Body of pancreas (tissue), 4 donors: ENCODE measurements at regions of chr9 and their contacts with region 1.

Region 1: GRCh38 chr9:72812559-72813111 is 140.2 kb downstream of the ALDH1A1 start:
- DNase-seq: no peak
- ATAC-seq: no peak
- H3K4me3 ChIP-seq: no peak overlapping the region
- H3K27ac ChIP-seq: no peak overlapping the region
- H3K4me1 ChIP-seq: peaks cover 14% of the 10 kb centered on the region
- H3K27me3 ChIP-seq: no peaks in the 10 kb centered on the region
- CTCF ChIP-seq: no peak
- POLR2A ChIP-seq: no peak

Region 2: GRCh38 chr9:72599879-72600534 is 212.6 kb before region 1 on chr9:
- intact Hi-C with region 1: loop called (anchors 10 kb)
- DNase-seq: no peak
- ATAC-seq: no peak
- H3K4me3 ChIP-seq: no peak overlapping the region
- H3K27ac ChIP-seq: no peak overlapping the region
- H3K4me1 ChIP-seq: no peaks in the 10 kb centered on the region
- H3K27me3 ChIP-seq: no peaks in the 10 kb centered on the region
- CTCF ChIP-seq: no peak
- POLR2A ChIP-seq: no peak